CD4-positive, alpha-beta memory T cell (primary cell): ENCODE measurements at regions of chr2 and their contacts with region 1.

Region 1: GRCh38 chr2:189685540-189686229 is 11.2 kb downstream of the ANKAR start:
- DNase-seq: no peak
- H3K4me3 ChIP-seq: no peak overlapping the region
- H3K4me3 Mint-ChIP-seq: no peak overlapping the region
- H3K27ac ChIP-seq: no peak overlapping the region
- H3K27ac Mint-ChIP-seq: peak overlapping the region in 2 of 7 donors; percentile 68 to 70
- H3K4me1 ChIP-seq: peaks cover 14% of the 10 kb centered on the region
- H3K4me1 Mint-ChIP-seq: peaks cover 13 to 23% (median 18%) of the 10 kb centered on the region in 4 donors
- H3K27me3 ChIP-seq: no peaks in the 10 kb centered on the region
- H3K27me3 Mint-ChIP-seq: no peaks in the 10 kb centered on the region

Region 2: DNA sequence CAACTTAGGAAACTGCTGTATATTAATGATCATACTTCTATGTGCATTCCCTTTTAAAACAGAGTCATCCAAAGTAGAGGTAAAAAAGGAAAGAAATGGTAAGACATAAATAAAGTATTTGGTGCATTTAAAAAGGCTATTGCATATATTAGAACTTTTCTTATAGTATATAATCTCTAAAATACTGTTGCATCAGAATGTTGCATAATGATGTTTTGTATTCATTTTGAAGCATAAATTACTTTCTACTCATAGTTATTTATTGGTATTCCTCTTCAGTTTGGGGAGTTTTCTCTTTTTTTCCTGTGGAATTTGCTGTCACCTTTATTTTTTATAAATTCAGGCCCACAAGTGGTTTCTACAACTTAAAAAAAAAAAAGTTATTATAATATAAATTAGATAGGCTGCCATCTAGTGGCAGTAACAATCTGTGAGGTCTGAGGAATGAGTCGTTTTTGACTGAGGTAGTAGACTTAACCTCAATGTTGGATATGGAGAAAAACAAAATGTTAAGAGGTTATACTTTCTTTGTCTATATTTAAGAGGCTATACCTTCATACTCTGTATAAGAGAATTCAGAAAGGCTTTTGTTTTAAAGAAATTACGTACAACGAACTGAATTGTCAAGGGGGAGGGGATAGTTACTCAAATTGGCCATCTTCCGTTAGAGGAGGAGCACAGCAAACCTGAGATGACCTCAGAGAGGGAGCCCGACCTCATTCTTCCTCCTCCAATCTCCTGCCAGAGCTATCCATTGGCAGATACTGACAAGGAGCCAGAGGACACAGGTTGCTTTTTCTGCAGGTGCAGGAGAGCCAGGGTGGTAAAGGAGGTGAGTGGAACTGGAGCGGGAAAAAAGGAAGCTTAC is 12.6 kb after region 1 on chr2:
- CTCF ChIA-PET with region 1: interaction called, 20 read pairs
- POLR2A ChIA-PET with region 1: no interaction called
- intact Hi-C with region 1: loop called (anchors 2 kb)
- DNase-seq: peak; percentile 40 to 50 (median 48)
- H3K4me3 ChIP-seq: no peak overlapping the region
- H3K4me3 Mint-ChIP-seq: no peak overlapping the region
- H3K27ac ChIP-seq: no peak overlapping the region
- H3K27ac Mint-ChIP-seq: peak overlapping the region in 2 of 7 donors; percentile 3 to 36
- H3K4me1 ChIP-seq: no peaks in the 10 kb centered on the region
- H3K4me1 Mint-ChIP-seq: no peaks in the 10 kb centered on the region
- H3K27me3 ChIP-seq: no peaks in the 10 kb centered on the region
- H3K27me3 Mint-ChIP-seq: no peaks in the 10 kb centered on the region

Region 3: DNA sequence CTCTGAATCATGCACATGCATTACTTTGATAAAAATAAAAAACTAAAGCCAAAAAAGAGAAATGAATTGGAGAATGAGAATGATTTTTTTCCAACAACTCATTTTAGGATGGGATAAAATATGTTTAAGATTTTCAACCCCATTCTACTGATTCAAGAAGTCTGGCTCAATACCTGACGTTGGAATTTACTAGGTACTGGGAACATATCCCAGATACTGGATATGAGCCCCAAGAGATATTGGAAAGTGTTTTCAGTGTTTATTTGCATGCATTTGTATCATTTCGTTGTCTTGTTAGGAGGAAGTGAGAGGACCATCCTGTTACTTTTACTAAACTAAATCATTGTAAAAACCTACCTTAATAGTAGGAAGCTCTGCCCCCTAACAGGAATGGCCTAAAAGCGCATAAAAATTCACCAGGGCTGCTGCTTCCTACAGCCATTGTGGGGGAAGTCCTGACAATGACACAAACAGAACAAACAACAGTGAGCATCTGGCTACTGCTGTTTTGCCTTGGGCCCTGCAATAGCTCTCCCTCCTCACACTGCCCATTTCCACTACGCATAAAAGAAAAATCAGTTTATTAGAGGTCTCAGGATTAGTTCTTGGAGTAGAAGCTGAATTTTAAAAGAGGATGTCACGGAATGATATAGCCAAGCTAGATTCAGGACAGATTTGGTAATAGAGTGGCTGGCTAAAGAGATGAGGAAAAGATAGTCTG is 24.0 kb after region 1 on chr2:
- CTCF ChIA-PET with region 1: no interaction called
- POLR2A ChIA-PET with region 1: no interaction called
- intact Hi-C with region 1: no loop called
- DNase-seq: no peak
- H3K4me3 ChIP-seq: no peak overlapping the region
- H3K4me3 Mint-ChIP-seq: no peak overlapping the region
- H3K27ac ChIP-seq: no peak overlapping the region
- H3K27ac Mint-ChIP-seq: no peak overlapping the region
- H3K4me1 ChIP-seq: no peaks in the 10 kb centered on the region
- H3K4me1 Mint-ChIP-seq: no peaks in the 10 kb centered on the region
- H3K27me3 ChIP-seq: no peaks in the 10 kb centered on the region
- H3K27me3 Mint-ChIP-seq: no peaks in the 10 kb centered on the region